Activated CD8-positive, alpha-beta T cell treated with anti-CD3 and anti-CD28 coated beads for 36 hours (primary cell): ENCODE measurements at regions of chr15 and their contacts with region 1.

Region 1: DNA sequence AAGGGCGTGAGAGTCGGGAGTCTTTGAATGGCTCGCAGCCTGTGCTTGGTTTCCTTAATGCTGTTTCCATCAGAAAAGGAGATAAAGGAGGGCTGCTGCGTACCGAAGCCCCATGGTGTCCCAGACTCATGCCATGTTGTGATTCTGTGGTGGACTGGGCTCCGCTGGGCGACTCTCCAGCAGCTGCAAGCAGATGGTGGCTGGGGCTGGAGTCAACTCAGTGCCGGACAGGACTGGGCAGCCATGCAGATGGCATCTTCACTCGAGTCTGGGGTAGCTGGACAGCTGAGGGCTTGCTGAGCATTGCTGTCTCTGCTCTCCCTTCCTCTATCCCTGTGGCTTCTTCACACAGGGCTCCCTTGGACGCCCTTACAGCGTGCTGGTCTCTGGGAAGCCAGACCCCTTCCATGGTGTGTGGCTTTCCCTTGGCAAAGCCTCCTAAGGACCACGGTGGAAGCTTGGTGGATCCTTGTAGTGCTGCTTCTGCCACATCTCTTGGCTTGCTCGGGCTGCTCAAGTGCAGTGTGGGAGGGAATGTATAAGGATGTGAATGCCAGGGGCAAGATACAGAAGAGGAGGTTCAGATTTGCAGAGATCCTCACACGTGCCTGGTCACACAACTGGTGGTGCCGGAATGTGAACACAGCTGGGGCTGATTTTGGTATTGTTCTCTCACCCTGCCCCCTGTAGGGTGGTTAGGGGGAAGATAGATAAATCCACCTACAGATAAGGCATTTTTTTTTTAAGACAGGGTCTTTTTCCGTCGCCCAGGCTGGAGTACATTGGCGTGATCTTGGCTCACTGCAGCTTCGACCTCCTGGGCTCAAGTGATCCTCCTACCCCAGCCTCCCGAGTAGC is 9.0 kb downstream of the NIPA1 start:
- DNase-seq: no peak
- ATAC-seq: no peak
- H3K4me3 Mint-ChIP-seq: no peak overlapping the region
- H3K27ac Mint-ChIP-seq: peak overlapping the region; percentile 25
- H3K4me1 Mint-ChIP-seq: peaks cover 48% of the 10 kb centered on the region
- H3K27me3 Mint-ChIP-seq: no peaks in the 10 kb centered on the region
- CTCF ChIP-seq: no peak

Region 2: DNA sequence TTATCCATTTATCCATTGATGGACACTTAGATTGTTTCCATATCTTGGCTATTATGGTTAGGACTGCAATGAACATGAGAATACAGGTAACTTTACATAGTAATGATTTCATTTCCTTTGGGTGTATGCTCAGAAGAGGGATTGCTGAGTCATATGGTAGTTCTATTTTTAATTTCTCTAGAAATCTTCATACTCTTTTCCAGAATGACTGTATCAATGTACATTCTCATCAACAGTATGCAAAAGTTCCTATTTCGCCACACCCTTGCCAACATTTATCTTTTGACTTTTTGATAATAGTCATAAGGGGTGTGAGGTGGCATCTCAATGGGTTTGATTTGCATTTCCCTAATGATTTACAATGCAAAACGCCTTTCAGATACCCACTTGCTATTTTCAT is 15.2 kb before region 1 on chr15:
- CTCF ChIA-PET with region 1: no interaction called
- POLR2A ChIA-PET with region 1: interaction called, 4 read pairs
- intact Hi-C with region 1: loop called (anchors 2 kb)
- DNase-seq: peak; percentile 32
- ATAC-seq: peak; percentile 81
- H3K4me3 Mint-ChIP-seq: no peak overlapping the region
- H3K27ac Mint-ChIP-seq: no peak overlapping the region
- H3K4me1 Mint-ChIP-seq: peaks cover 30% of the 10 kb centered on the region
- H3K27me3 Mint-ChIP-seq: no peaks in the 10 kb centered on the region
- CTCF ChIP-seq: no peak

Region 3: GRCh38 chr15:22872936-22873701 is 77.7 kb after region 1 on chr15:
- CTCF ChIA-PET with region 1: no interaction called
- POLR2A ChIA-PET with region 1: no interaction called
- intact Hi-C with region 1: no loop called
- DNase-seq: no peak
- ATAC-seq: no peak
- H3K4me3 Mint-ChIP-seq: no peak overlapping the region
- H3K27ac Mint-ChIP-seq: no peak overlapping the region
- H3K4me1 Mint-ChIP-seq: no peaks in the 10 kb centered on the region
- H3K27me3 Mint-ChIP-seq: no peaks in the 10 kb centered on the region
- CTCF ChIP-seq: no peak